Transverse colon (tissue), 4 donors: ENCODE measurements at regions of chr3 and their contacts with region 1.

Region 1: GRCh38 chr3:59518283-59519055 is 468.6 kb upstream of the CFAP20DC start:
- DNase-seq: no peak
- H3K4me3 ChIP-seq: no peak overlapping the region
- H3K27ac ChIP-seq: no peak overlapping the region
- H3K4me1 ChIP-seq: no peaks in the 10 kb centered on the region
- H3K27me3 ChIP-seq: no peaks in the 10 kb centered on the region
- CTCF ChIP-seq: no peak
- EP300 ChIP-seq: no peak
- POLR2A ChIP-seq: no peak

Region 2: DNA sequence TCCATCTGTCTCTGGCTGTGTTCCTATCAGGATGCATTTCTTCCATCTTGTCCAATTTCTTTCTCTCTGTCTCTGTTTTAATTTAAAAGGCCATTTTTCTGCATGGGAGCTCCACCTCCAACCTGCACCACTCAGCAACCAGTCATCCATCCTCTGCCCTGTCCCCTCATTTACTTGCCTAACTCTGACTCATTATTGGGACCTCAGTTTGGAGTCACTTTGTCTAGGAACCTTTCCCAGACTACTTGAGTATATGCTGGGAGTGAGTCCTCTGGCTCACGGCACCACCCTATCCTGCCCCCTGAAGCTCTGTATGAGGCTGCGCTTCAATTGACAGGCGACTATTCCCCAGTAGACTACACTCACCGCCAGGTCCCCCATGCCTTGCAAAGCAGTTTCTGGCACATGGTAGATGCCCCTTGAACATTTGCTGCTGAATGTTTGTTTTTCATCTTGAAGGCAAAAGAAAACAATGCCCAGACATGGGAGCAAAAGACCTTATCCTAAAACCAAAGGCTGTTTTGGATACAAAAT is 44.7 kb after region 1 on chr3:
- in situ Hi-C with region 1: no loop called
- intact Hi-C with region 1: loop called (anchors 2 kb)
- DNase-seq: no peak
- H3K4me3 ChIP-seq: no peak overlapping the region
- H3K27ac ChIP-seq: no peak overlapping the region
- H3K4me1 ChIP-seq: no peaks in the 10 kb centered on the region
- H3K27me3 ChIP-seq: no peaks in the 10 kb centered on the region
- CTCF ChIP-seq: no peak
- EP300 ChIP-seq: no peak
- POLR2A ChIP-seq: no peak